Natural killer cell (primary cell): ENCODE measurements at regions of chr4 and their contacts with region 1.

Region 1: DNA sequence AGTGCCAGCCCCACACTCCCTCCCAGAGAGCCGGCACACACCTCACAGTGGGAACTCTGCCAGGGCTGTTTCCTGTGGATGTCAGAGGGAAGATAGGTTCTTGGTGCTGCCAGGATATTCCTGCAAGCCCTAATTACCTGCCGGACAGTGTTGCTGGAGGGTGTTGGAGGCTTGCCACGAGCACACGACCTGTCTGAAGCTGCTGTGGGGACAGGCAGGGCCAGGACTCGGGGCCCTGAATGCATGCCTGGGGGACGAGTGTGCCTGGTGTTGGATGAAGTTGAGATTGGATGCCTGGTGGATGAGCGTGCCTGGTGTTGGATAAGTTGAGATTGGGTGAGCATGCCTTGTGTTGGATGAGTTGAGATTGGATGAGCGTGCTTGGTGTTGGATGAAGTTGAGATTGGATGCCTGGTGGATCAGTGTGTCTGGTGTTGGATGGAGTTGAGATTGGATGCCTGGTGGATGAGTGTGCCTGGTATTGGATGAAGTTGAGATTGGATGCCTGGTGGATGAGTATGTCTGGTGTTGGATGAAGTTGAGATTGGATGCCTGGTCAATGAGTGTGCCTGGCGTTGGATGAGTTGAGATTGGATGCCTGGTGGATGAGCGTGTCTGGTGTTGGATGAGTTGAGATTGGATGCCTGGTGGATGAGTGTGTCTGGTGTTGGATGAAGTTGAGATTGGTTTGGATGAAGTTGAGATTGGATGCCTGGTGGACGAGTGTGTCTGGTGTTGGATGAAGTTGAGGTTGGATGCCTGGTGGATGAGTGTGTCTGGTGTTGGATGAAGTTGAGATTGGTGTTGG is 23.2 kb upstream of the UVSSA start:
- DNase-seq: no peak
- ATAC-seq: no peak
- H3K4me3 ChIP-seq: no peak overlapping the region
- H3K4me3 Mint-ChIP-seq: no peak overlapping the region
- H3K27ac ChIP-seq: no peak overlapping the region
- H3K27ac Mint-ChIP-seq: no peak overlapping the region
- H3K4me1 ChIP-seq: peaks cover 3% of the 10 kb centered on the region
- H3K4me1 Mint-ChIP-seq: peaks cover 0 to under 1% of the 10 kb centered on the region in 2 donors
- H3K27me3 ChIP-seq: no peaks in the 10 kb centered on the region
- H3K27me3 Mint-ChIP-seq: no peaks in the 10 kb centered on the region
- CTCF ChIP-seq: no peak

Region 2: DNA sequence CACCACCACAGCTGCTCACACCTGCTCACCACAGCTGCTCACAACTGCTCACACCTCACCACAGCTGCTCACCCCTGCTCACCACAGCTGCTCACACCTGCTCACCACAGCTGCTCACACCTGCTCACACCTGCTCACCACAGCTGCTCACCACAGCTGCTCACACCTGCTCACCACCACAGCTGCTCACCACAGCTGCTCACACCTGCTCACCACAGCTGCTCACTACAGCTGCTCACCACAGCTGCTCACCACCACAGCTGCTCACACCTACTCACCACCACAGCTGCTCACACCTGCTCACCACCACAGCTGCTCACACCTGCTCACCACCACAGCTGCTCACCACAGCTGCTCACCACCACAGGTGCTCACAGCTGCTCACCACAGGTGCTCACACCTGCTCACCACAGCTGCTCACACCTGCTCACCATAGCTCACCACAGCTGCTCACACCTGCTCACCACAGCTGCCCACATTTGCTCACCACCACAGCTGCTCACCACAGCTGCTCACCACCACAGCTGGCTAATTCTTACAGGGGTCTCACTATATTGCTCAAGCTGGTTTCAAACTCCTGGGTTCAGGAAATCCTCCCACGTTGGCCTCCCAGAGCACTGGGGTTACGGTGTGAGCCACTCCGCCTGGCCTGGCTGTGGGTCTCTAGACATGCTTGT is 467.5 kb before region 1 on chr4:
- intact Hi-C with region 1: no loop called
- DNase-seq: peak in 1 of 2 donors; percentile 29
- ATAC-seq: peak in 2 of 3 donors; percentile 52 to 56
- H3K4me3 ChIP-seq: no peak overlapping the region
- H3K4me3 Mint-ChIP-seq: peak overlapping the region; percentile 58
- H3K27ac ChIP-seq: peak overlapping the region; percentile 62
- H3K27ac Mint-ChIP-seq: peak overlapping the region; percentile 93 to 98
- H3K4me1 ChIP-seq: peaks cover 3% of the 10 kb centered on the region
- H3K4me1 Mint-ChIP-seq: peaks cover 20 to 27% of the 10 kb centered on the region in 2 donors
- H3K27me3 ChIP-seq: no peaks in the 10 kb centered on the region
- H3K27me3 Mint-ChIP-seq: no peaks in the 10 kb centered on the region
- CTCF ChIP-seq: no peak

Region 3: GRCh38 chr4:1309261-1310010 is 14.4 kb before region 1 on chr4:
- intact Hi-C with region 1: loop called (anchors 1 kb)
- DNase-seq: peak; percentile 60 to 71
- ATAC-seq: peak; percentile 92 to 93 (median 92)
- H3K4me3 ChIP-seq: peak overlapping the region; percentile 30
- H3K4me3 Mint-ChIP-seq: peak overlapping the region; percentile 76
- H3K27ac ChIP-seq: peak overlapping the region; percentile 55
- H3K27ac Mint-ChIP-seq: peak overlapping the region; percentile 87 to 91
- H3K4me1 ChIP-seq: peaks cover 40% of the 10 kb centered on the region
- H3K4me1 Mint-ChIP-seq: peaks cover 46 to 54% of the 10 kb centered on the region in 2 donors
- H3K27me3 ChIP-seq: no peaks in the 10 kb centered on the region
- H3K27me3 Mint-ChIP-seq: no peaks in the 10 kb centered on the region
- CTCF ChIP-seq: no peak